ENCODE measurements at regions of chr11 and their contacts with region 1.

Region 1: DNA sequence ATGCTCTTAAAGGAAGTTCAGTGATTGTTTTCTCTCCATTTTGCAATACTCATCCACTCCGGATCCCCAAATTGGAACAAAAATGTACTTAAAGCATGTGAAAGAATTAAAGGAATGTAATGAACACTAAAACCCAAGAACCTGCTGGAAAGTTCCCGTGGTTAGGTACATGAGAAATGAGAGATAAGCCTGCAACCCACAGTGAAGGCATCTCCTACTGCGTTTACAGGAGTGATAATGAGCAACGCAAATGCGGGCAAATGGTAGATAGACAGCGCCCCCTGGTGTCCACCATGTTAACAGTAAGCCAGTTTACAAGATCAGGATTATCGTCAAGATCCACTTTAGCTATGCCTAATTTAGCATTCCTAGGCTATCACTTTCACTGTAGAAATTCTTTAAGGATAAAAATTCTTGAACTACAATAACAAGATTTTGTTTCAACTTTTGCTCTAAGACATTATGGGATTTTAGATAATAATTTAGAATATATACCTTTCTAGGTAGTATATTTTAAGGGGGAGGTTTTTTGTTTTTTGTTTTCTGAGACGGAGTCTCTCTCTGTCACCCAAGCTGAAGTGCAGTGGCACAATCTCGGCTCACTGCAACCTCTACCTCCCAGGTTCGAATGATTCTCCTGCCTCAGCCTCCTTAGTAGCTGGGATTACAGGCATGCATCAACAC is 29.9 kb downstream of the ALG9 start:
- DNase-seq: peak; percentile 82 to 93 (median 91)
- H3K4me3 ChIP-seq: no peak overlapping the region
- H3K27ac ChIP-seq: no peak overlapping the region
- H3K4me1 ChIP-seq: no peaks in the 10 kb centered on the region
- H3K27me3 ChIP-seq: no peaks in the 10 kb centered on the region
- CTCF ChIP-seq: peak; percentile 74 to 94 (median 87)
- EP300 ChIP-seq: no peak
- POLR2A ChIP-seq: peak; percentile 9

Region 2: DNA sequence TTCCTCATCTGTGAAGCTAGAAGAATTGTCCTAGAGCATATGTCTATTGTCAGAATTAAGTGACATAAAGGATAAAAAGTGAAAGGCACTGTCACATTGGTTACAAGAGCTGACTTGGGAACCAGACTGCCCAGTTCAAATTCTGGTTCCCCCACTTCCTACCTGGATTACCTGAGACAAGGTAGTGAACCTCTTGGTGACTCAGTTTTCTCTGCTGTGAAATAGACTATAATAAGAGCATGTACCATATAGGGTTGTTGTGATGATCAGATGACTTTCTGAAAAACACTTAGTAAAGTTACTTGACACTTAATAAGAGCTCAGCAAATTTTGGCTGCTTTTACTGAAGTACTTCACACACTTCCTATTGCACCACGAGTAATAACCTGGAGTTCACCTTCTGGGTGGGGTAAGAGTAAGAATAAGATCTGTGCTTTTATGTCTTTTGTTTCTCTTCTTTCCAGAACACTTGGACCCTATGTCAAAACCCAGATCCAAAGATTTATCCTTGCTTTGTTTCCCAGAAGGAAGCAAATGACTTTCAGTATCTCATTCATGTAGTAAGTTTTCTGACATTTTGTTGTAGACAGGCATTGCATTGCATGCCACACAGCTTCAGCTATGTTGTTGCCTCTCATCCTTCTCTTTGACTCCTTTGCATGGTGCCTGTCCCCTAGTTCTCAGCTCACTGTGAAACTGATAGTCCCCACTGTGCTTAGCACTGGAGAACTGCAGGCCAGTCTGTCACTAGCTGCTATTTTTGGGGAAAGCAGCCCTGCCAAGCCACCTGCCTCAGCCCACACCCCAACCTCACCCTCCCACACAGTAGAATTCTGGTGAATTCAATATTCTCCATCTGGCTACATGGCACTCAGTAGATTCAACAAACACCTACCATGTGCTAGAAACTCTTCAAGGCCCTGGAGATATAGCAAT is 717.8 kb before region 1 on chr11:
- intact Hi-C with region 1: no loop called
- DNase-seq: no peak
- H3K4me3 ChIP-seq: no peak overlapping the region
- H3K27ac ChIP-seq: no peak overlapping the region
- H3K4me1 ChIP-seq: no peaks in the 10 kb centered on the region
- H3K27me3 ChIP-seq: no peaks in the 10 kb centered on the region
- CTCF ChIP-seq: no peak
- EP300 ChIP-seq: no peak
- POLR2A ChIP-seq: no peak

Region 3: GRCh38 chr11:111565114-111565720 is 276.3 kb before region 1 on chr11:
- intact Hi-C with region 1: loop called in 3 of 4 experiments (anchors 5 kb)
- DNase-seq: peak; percentile 60 to 84 (median 72)
- H3K4me3 ChIP-seq: no peak overlapping the region
- H3K27ac ChIP-seq: no peak overlapping the region
- H3K4me1 ChIP-seq: peaks cover 4% of the 10 kb centered on the region
- H3K27me3 ChIP-seq: no peaks in the 10 kb centered on the region
- CTCF ChIP-seq: peak; percentile 75 to 83 (median 77)
- EP300 ChIP-seq: no peak
- POLR2A ChIP-seq: no peak

Region 4: GRCh38 chr11:111574373-111575225 is 266.9 kb before region 1 on chr11:
- intact Hi-C with region 1: loop called in 2 of 4 experiments (anchors 5 kb)
- DNase-seq: no peak
- H3K4me3 ChIP-seq: no peak overlapping the region
- H3K27ac ChIP-seq: no peak overlapping the region
- H3K4me1 ChIP-seq: peaks cover 20% of the 10 kb centered on the region
- H3K27me3 ChIP-seq: no peaks in the 10 kb centered on the region
- CTCF ChIP-seq: no peak
- EP300 ChIP-seq: no peak
- POLR2A ChIP-seq: no peak

Region 5: DNA sequence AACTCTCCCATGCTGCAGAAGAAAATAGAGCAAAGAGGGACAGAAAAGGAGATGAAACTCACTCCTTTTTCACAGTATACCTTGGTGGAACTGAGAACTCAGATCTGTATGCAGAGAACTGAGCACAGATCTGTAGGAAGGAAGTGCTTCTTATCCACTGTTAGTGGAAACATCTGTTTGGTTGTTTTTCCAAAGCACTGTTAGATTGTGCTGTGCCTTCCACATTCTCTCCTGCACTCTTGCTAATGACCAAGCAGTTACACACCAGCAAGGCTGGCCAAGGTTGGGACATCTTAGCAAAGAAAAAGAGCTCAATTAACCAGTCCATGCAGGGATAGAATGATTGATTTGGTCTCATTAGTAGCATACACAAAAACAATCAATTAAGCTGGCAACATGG is 259.3 kb before region 1 on chr11:
- intact Hi-C with region 1: loop called in 1 of 4 experiments (anchors 5 kb)
- DNase-seq: no peak
- H3K4me3 ChIP-seq: no peak overlapping the region
- H3K27ac ChIP-seq: peak overlapping the region in 1 of 2 donors; percentile 1
- H3K4me1 ChIP-seq: peaks cover 8% of the 10 kb centered on the region
- H3K27me3 ChIP-seq: no peaks in the 10 kb centered on the region
- CTCF ChIP-seq: no peak
- EP300 ChIP-seq: no peak
- POLR2A ChIP-seq: no peak

Region 6: DNA sequence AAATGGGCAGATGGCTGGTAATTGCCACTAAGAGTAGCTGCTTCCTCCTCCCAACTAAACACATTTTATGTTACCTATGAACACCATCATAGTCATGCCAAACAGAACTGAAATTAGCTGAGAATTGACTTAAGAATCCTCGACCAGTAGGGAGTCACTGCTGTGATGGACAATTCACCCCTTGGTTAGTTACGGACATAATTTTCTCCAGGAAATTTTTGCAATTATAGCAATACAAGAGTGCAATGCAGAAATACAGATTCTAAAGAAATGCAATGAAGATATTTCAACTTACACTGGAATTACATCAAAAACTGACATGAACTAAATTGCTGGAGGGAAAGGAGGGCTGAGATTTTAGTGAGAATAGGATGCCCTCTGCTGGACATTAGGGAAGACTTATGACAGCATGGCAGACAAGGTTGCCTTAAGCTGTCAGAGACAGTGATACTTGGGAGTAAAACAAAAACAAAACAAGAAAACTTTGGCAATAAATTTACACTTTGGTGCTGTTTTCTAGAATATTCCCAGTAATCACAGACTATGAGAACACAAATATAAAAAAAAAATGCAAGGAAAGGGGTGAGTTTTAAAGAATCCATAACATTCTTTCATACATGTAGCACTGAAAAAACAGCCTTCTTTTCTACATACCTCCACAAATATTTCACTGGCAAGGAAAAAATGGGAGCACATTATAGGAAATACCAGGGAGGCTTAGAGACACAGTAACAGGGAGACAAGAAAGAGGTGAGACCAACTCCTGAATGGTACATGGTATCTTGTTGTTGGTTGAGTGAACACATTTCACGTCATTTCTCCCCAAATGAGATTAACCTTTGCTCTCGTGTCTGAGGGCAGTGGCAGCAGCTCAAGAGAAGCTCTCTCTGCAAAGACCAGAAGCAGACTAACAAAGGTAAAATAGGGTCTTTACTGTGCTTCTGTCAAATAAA is 64.1 kb before region 1 on chr11:
- intact Hi-C with region 1: loop called in 2 of 4 experiments (anchors 10 kb)
- DNase-seq: peak in 1 of 5 donors; percentile 49
- H3K4me3 ChIP-seq: no peak overlapping the region
- H3K27ac ChIP-seq: no peak overlapping the region
- H3K4me1 ChIP-seq: no peaks in the 10 kb centered on the region
- H3K27me3 ChIP-seq: no peaks in the 10 kb centered on the region
- CTCF ChIP-seq: peak; percentile 67 to 95 (median 88)
- EP300 ChIP-seq: no peak
- POLR2A ChIP-seq: no peak

Region 7: GRCh38 chr11:112392904-112393303 is 551.4 kb after region 1 on chr11:
- intact Hi-C with region 1: no loop called
- DNase-seq: no peak
- H3K4me3 ChIP-seq: no peak overlapping the region
- H3K27ac ChIP-seq: no peak overlapping the region
- H3K4me1 ChIP-seq: no peaks in the 10 kb centered on the region
- H3K27me3 ChIP-seq: no peaks in the 10 kb centered on the region
- CTCF ChIP-seq: no peak
- EP300 ChIP-seq: no peak
- POLR2A ChIP-seq: no peak

Region 8: DNA sequence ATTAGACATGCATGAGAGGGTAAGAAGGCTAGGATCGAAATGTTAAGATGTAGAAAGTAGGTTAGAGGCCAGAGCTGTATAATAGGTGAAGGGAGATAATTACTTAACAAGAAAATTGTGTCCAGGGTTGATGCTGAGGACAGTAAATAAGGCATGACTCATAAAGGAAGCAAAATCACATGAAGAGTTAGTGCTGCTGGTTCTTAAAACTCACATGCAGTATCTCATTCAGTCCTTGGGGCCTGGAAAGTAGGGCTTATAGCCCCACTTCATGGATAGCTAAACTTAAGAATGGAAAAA is 1249.9 kb after region 1 on chr11:
- intact Hi-C with region 1: no loop called
- DNase-seq: no peak
- H3K4me3 ChIP-seq: no peak overlapping the region
- H3K27ac ChIP-seq: no peak overlapping the region
- H3K4me1 ChIP-seq: peaks cover 3% of the 10 kb centered on the region
- H3K27me3 ChIP-seq: no peaks in the 10 kb centered on the region
- CTCF ChIP-seq: no peak
- EP300 ChIP-seq: no peak
- POLR2A ChIP-seq: no peak